Vagina (tissue), 2 donors: ENCODE measurements at regions of chr11 and their contacts with region 1.

Region 1: DNA sequence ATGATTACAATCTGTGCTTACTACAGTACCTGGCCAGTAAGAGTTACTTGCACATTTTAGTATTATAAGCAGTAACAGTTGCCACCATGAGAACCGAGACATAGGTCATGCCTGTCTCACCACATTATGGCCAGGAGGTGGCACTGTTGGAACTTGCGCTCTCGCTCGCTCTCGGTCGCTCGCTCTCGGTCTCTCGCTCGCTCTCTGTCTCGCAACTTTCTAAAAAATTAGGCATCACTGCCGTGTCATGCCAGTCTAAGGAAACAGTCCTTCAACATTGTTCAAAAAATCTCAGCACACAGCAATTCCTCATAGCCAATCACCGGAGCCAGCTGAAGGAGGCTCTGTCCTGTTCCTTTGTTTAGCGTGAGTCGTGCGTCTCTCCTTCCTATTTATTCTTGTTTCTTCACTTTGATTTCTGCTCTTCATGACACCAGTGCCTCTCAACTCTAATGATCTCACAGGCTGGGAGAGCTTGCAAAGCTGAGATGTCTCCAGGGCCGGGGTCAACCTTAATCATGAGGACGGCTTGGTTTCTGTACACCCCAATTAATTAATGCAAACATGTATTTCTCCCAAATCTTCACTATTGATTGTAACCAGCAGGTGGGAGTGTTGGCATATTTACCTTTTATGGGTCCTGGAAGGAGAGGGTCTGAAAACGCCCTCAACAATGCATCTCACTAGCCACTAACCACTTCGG is 6.3 kb upstream of the ADAMTS8 start:
- DNase-seq: no peak
- H3K4me3 ChIP-seq: peak overlapping the region; percentile 50 to 53
- H3K27ac ChIP-seq: peak overlapping the region; percentile 80
- H3K4me1 ChIP-seq: peaks cover 8% of the 10 kb centered on the region
- H3K27me3 ChIP-seq: no peaks in the 10 kb centered on the region
- CTCF ChIP-seq: peak; percentile 70 to 90 (median 70)
- POLR2A ChIP-seq: no peak

Region 2: DNA sequence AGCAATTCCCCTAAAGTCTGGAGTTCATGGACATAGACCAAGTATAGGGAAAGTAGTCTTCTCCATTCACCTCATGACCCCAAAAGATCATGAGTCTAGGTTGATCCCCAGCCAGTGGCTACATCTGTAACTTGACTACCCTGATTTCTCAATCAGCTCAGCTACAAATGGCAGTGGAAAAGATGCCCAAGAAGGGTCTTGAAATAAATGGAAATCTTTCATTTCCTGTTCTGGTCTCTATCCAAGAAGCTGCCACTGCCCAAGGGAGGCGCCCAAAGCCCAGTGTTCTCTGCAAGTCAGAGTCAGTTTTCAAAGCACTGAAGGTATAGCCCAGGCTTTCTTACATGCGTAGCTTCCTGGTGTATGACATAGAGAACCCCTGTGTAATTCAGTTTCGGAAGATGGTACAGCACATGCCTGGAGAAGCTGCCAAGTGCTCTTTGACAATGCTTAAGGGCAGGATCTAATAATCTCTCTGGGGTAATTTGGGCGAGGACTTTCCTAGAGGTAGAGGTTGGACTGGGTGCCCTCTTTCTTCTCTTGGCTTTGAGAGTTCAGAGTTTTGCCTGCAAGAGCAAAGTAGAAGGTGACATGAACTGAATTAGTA is 114.8 kb after region 1 on chr11:
- intact Hi-C with region 1: no loop called
- DNase-seq: no peak
- H3K4me3 ChIP-seq: no peak overlapping the region
- H3K27ac ChIP-seq: no peak overlapping the region
- H3K4me1 ChIP-seq: peaks cover 17% of the 10 kb centered on the region
- H3K27me3 ChIP-seq: no peaks in the 10 kb centered on the region
- CTCF ChIP-seq: no peak
- POLR2A ChIP-seq: no peak

Region 3: DNA sequence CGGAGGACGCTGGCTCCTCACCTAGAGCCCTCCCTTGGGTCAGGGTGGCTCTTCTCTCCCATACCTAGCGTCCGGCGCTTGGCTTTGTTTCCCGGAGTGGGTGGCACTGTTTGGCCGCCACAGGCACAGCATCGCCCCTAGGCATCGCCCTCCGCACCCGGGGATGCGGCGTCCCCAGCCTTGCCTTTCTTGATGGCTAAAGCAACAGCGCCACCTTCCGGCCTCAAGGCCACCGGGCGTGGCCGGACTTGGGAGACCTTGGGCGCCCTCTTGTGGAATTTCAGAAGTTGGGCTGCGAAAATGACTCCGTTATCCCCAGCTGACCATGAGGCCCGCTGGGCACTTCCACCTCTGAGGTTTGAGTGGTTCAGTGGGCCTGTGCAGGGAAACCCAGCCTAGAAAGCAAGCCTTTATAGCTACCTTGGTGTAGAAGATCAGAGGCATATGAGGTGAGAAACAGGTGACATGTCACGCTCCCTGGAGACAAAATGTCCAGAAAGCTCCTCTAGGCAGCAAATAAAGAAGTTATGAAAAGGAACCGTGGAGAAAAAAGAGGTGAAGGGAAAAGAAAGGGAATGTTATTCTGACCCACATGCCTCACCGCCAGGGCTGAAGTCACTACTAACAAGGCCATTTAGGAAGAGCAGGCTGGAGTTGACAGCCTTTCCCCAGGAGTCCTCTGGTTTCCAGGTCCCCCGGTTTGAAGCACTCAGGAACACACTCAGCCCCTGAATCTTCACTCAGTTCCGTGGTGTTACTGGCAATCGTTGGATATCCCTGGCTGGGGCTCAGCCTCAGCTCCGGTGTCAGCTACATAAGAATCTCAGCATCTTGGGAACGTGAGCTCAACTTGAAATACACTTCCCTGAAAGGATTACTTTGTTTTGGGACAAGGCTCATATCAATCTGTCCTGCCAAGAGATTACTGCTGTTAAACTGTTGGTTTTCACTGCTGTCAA is 427.5 kb after region 1 on chr11:
- intact Hi-C with region 1: loop called (anchors 1 kb)
- DNase-seq: peak in 1 of 2 donors; percentile 89
- H3K4me3 ChIP-seq: no peak overlapping the region
- H3K27ac ChIP-seq: no peak overlapping the region
- H3K4me1 ChIP-seq: peaks cover 6% of the 10 kb centered on the region
- H3K27me3 ChIP-seq: no peaks in the 10 kb centered on the region
- CTCF ChIP-seq: peak; percentile 100
- POLR2A ChIP-seq: no peak